Naive thymus-derived CD8-positive, alpha-beta T cell (primary cell): ENCODE measurements at regions of chr5 and their contacts with region 1.

Region 1: GRCh38 chr5:100900796-100901781 is 2.0 kb downstream of the ST8SIA4 start:
- DNase-seq: peak; percentile 69 to 92 (median 85)
- ATAC-seq: peak; percentile 56 to 58
- H3K4me3 Mint-ChIP-seq: peak overlapping the region; percentile 85 to 100 (median 96)
- H3K27ac Mint-ChIP-seq: peak overlapping the region; percentile 87 to 98 (median 96)
- H3K4me1 Mint-ChIP-seq: peaks cover 32 to 69% (median 50%) of the 10 kb centered on the region in 4 donors
- H3K27me3 Mint-ChIP-seq: no peaks in the 10 kb centered on the region

Region 2: DNA sequence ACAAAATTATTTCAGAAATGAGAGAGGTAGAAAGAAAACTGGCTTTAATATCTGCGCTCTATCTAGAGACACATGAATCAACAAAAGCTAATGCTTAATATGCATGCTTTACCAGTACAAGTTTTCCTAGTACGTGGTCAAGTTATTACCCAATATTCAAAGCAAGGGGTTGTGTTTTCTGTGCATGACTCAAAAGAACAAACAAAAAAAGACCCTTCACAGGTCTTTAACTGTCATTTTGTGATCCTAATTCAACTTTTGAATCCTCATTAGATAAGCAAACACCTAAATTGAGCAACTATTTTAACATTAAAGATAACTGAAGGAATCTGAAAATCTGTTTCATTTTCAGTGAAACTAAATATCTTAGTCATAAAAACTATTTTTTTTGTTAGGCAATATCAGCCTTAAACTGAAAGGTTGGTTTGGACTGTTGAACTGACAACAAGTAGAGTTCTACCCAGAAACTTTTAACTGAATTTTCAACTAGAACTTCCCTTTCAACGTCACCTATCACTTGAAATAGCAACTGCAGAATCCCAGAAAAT is 10.6 kb before region 1 on chr5:
- POLR2A ChIA-PET with region 1: interaction called, 11 read pairs
- DNase-seq: peak in 1 of 10 donors; percentile 5
- ATAC-seq: no peak
- H3K4me3 Mint-ChIP-seq: peak overlapping the region in 6 of 10 donors; percentile 29 to 82 (median 70)
- H3K27ac Mint-ChIP-seq: peak overlapping the region in 7 of 10 donors; percentile 28 to 94 (median 60)
- H3K4me1 Mint-ChIP-seq: peaks cover 12 to 81% (median 57%) of the 10 kb centered on the region in 4 donors
- H3K27me3 Mint-ChIP-seq: no peaks in the 10 kb centered on the region

Region 3: GRCh38 chr5:100939981-100940380 is 38.9 kb after region 1 on chr5:
- POLR2A ChIA-PET with region 1: no interaction called
- DNase-seq: no peak
- ATAC-seq: no peak
- H3K4me3 Mint-ChIP-seq: no peak overlapping the region
- H3K27ac Mint-ChIP-seq: no peak overlapping the region
- H3K4me1 Mint-ChIP-seq: no peaks in the 10 kb centered on the region
- H3K27me3 Mint-ChIP-seq: peaks cover 0 to 2% (median 0%) of the 10 kb centered on the region in 5 donors